ENCODE measurements at regions of chr1 and their contacts with region 1.

Region 1: DNA sequence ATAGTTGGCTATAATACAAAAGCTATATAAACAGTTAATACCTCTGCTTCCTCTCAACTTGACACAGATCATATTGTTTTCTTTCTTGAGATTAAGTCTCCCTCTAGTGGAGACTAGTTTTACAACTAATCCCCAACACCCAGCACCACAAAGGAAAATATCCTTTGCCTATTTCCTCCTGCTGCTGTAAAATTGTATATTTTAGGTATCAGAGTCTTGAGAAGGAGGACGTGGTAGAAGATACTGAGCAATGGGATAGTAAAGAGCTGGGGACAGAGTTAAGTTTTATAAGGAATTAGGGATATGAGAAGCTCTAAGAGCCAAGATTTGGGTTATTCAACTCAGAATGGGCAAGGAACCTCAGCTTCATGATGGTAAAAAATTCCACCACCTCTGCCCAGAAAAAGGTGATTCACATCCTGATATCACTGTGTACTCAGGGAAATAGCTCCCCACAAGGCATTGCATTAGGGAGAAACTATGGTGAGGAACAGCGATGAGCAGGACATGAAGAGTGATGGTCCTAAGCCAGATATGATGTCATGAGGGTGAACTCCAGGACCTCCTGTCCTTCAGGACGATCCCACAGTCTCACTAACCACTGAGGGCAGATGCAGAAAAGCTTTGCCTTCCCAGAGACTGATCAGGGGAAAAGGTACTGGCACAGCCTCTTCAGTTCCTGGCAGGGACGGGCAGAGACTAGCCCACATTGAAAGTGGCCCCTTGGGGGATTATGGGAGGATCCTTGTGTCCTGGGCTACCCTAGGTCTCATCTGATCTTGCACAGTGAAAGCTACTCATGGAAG is 14.7 kb upstream of the CFAP126 start:
- DNase-seq: no peak
- H3K4me3 Mint-ChIP-seq: no peak overlapping the region
- H3K27ac Mint-ChIP-seq: no peak overlapping the region
- H3K4me1 Mint-ChIP-seq: peaks cover 18% of the 10 kb centered on the region
- H3K27me3 Mint-ChIP-seq: no peaks in the 10 kb centered on the region

Region 2: DNA sequence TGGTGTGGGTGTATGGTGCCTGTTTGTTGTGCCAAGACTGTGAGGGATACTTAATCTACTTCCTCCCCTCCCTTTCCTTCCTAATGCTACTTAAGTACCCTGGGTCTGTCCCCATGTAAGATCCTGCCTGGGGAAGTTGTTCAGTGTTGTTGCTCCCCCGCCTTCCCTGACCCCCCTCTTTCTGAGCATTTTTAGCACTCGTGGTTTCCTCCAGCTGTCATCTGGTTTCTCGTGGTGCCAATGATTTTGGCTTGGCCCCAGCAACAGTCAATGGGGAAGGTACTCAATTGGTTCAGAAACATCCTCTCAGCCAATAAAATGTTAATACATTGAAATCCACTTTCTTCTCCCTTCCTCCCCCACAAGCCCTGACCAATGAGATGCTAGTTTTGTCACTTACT is 197.1 kb before region 1 on chr1:
- CTCF ChIA-PET with region 1: interaction called, 15 read pairs
- POLR2A ChIA-PET with region 1: interaction called, 4 read pairs
- DNase-seq: peak; percentile 88
- H3K4me3 Mint-ChIP-seq: peak overlapping the region; percentile 71
- H3K27ac Mint-ChIP-seq: peak overlapping the region; percentile 93
- H3K4me1 Mint-ChIP-seq: peaks cover 79% of the 10 kb centered on the region
- H3K27me3 Mint-ChIP-seq: no peaks in the 10 kb centered on the region

Region 3: DNA sequence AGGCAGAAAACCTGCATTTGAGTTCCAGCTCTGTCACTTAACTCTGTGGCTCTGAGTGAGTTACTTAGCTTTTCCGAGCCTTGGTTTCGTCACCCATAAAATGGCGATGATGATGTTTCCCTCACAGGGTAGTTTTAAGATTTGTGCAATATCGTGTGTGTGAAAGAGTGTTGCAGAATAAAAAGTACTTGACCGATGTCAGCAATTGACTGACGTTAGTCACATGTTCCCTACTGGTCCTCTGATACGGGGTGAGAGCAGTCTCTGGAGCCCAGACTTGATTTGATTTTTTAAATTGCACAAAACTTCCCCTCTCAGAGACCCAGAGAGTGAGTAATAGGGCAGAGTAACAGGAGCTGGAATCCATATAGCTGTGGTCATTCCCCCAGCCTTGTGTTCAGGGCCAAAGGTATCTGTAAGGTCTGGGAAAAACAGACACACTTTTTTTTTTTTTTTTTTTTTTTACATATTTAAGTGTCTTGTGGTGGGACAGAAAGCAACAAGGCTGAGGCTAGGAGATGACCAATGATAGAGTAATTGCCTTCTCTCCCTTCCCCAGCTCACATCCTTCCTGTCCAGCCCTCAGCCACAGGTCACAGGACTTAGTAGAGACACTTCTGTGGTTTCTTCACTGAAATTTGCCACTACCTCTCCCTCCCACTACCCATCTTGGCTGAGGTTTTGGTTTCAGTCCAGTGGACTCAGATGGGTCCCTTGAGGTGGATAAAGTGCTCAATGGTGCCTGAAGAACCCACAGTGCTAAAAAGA is 165.3 kb before region 1 on chr1:
- CTCF ChIA-PET with region 1: interaction called, 15 read pairs
- POLR2A ChIA-PET with region 1: no interaction called
- DNase-seq: no peak
- H3K4me3 Mint-ChIP-seq: no peak overlapping the region
- H3K27ac Mint-ChIP-seq: peak overlapping the region; percentile 7
- H3K4me1 Mint-ChIP-seq: peaks cover 43% of the 10 kb centered on the region
- H3K27me3 Mint-ChIP-seq: no peaks in the 10 kb centered on the region

Region 4: DNA sequence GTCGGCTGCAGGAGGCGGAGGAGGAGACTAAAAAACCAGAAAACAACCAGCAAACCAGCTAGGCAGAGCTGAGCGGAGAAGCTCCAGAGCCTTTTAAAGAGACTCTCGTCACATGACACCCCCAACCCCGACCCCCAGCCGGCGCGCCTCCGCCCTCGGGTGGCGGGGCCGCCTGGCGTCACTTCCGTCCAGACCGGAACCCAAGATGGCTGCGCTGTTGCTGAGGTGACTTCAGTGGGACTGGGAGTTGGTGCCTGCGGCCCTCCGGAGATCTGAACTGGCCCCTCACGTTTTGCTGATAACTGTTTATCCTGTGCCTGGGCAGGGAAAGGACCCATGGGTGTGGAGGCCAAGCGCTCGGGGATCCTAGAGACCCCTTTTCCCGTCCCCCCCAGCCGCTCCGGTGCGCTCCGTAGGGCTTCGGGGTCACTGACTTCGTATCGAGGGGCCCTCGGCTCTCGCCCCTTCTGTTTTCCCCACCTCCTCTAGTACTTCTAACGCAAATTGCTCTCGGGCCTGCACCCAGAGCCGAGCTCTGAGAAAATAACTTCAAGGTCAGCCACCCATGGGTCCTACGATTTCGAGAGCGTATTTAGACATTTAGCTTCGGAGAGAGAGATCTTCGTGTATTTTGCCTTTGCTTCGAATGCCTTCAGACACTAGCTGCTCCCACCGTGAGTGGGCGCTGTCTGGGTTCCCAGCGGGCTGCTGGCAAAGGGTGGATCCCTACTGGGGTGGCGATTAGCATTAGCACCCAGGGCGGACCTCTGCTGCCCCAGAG is 68.0 kb before region 1 on chr1 and contains the start of gene SDHC:
- CTCF ChIA-PET with region 1: interaction called, 11 read pairs
- POLR2A ChIA-PET with region 1: interaction called, 5 read pairs
- DNase-seq: peak; percentile 91
- H3K4me3 Mint-ChIP-seq: peak within 1 kb of the TSS; percentile 93
- H3K27ac Mint-ChIP-seq: peak within 1 kb of the TSS; percentile 95
- H3K4me1 Mint-ChIP-seq: peaks cover 20% of the 10 kb centered on the region
- H3K27me3 Mint-ChIP-seq: peaks cover 3% of the 10 kb centered on the region
- total RNA-seq, gene SDHC: 172 to 173 TPM

Region 5: DNA sequence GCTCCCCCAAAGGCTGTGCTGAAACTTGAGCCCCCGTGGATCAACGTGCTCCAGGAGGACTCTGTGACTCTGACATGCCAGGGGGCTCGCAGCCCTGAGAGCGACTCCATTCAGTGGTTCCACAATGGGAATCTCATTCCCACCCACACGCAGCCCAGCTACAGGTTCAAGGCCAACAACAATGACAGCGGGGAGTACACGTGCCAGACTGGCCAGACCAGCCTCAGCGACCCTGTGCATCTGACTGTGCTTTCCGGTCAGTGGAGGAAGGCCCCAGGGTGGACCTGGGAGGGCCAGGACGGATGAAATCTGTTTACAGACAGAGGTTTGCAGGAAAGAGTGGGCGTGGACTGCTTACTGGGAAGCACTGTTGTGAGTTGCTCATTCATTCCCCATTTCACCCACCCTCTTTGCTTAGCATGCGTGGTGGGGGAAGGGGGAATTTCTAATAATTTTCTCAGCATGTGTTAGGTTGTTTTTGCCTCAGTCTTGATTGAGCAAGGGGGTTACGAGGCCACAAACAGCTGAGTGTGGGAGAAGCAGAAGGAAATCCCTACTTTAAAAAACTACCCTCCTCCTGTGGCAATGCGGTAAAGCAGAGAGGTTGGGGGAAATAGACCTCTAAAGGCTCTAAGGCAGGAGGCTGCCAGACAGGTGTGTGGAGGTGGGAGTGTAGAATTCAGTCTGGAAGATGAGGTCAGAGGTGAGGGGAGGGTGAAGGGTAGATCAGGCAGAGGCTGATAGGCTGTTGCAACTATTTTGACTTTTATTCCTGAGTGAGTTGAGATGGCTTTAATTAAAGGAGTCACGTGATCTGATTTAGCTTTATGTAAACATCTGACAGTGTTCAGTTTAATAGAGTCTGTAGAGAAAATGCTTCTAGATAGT is 124.2 kb after region 1 on chr1:
- CTCF ChIA-PET with region 1: no interaction called
- POLR2A ChIA-PET with region 1: no interaction called
- DNase-seq: no peak
- H3K4me3 Mint-ChIP-seq: no peak overlapping the region
- H3K27ac Mint-ChIP-seq: no peak overlapping the region
- H3K4me1 Mint-ChIP-seq: peaks cover 5% of the 10 kb centered on the region
- H3K27me3 Mint-ChIP-seq: peaks cover 18% of the 10 kb centered on the region

Measured in activated CD4-positive, alpha-beta memory T cell treated with anti-CD3 and anti-CD28 coated beads, Interleukin-2, amount 10 ng/mL, durations not matched to agents 7 days and 5 days (primary cell).